ENCODE measurements at regions of chr2 and their contacts with region 1.

Region 1: DNA sequence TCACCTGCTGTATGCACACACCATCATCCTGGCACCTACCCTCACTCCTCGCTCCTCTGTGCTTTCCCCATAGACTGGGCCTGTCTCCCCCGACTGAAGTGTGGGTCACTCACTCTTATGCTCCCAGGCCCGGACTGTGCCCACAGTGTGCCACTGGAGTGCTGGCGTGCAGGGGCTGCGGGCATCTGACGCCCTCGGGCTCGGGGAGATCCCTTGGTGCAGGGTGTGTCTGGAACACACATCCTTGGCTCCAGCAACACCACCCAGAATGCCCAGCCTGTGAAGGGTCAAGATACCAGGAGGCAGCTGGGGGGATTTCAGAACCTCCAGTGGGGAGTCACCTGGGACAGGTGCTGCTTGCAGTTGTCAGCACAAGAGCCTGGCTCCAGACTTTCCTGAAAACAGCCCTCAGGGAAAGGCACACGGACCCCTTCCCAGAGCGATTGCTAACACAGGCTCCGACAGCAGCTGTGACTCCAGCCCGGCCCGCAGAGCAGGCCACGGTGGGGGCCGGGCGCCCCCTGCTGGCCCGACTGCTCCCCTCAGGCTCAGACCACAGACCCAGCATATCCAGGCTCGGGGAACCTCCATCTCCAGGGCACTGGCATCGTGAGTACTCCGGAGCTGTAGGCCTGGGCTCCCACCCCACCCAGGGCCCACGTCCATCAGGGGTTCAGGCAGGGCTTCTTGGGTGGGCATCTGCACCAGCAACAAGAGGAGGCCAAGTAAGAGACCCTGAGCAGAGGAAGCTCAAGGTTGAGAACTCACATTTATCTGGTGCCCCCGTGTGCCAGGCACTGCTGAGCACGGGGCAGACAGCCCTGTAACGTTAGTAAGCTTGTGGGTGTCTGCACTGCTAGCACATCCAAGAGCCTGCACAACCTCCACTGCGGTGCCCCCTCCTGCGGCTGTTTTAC is 8.6 kb downstream of the HS1BP3 start:
- DNase-seq: peak; percentile 91
- CTCF ChIP-seq: peak; percentile 97

Region 2: DNA sequence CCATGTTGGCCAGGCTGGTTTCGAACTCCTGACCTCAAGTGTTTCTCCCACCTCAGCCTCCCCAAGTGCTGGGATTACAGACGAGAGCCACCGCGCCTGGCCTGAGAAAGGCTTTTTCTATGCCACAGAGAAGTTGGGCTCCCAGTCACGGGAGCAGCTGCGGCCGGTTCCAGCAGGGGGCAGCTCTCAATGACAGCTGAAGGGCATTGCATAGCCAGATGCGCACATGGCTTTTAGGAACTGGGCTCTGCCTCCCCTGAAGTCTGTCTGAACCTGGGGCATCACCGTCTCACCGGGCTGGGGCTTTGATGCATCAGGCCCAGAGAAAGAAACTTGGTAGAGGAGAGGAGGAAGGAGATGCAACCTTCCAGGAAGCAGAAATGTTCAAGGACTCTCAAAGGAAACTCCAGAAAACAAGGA is 506.7 kb before region 1 on chr2:
- in situ Hi-C with region 1: loop called (anchors 25 kb)
- DNase-seq: peak; percentile 80
- CTCF ChIP-seq: peak; percentile 94

Region 3: DNA sequence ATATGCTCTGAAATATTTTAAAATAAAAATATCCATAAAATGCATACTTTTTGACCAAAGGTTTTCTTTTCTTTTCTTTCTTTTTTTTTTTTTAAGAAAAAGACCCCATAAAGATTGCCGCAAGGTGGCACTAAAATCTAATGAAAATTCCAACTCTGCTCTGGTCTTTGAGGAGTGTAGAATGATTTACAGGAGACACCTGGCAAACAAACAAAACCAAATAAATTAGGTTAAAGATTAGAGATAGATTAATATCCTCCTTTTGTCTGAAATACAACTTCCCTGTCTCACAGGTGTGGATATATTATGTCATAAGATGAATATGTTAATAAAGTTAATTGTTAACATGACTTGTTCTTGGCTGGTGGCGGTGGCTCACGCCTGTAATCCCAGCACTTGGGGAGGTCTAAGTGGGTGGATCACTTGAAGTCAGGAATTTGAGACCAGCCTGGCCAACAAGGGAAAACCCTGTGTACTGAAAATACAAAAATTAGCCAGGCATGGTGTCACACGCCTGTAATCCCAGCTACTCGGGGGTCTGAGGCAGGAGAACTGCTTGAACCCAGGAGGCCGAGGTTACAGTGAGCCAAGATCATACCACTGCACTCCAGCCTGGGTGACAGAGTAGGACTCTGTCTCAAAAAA is 198.9 kb before region 1 on chr2:
- in situ Hi-C with region 1: loop called (anchors 5 kb)
- DNase-seq: peak; percentile 50
- CTCF ChIP-seq: peak; percentile 26

Region 4: DNA sequence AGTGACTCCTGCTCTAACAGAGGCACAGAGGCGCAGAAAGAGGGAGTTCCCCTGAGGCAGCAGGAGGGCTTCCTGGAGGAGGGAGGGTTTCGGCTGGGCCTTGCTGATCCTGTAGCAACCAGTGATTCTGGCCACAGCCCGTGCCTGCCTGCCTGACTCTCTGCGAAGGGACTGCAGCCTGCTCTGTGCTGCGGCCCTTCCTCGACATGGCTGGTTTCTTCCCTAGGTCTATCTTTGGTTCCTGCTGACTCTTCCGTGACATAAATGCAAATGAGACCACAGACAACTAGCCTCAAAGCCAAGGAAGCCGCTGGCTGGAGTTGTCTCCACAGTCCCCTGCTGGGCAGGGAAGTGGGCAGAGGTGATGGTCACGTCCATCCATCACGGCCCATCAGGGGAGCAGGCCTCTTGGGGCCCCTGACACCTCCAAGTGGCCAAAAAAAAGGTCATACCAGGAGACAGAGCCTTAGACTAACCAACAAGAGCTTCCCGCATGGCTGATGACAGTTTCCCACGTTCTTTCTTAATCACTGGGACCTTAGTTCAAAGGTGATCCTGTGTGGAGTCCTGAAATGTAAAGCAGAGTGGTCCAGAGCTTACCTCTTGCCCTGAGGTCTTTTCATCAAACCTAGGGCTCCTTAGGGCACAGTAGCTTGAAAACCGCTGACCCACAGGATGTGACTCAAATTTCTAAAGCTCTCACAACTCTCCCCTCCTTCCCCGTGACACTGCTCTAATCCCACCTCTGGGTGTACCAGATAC is 46.7 kb before region 1 on chr2:
- in situ Hi-C with region 1: no loop called
- DNase-seq: peak; percentile 72
- CTCF ChIP-seq: peak; percentile 19

Measured in GM13977 (cell line).